ENCODE measurements at regions of chr11 and their contacts with region 1.

Region 1: DNA sequence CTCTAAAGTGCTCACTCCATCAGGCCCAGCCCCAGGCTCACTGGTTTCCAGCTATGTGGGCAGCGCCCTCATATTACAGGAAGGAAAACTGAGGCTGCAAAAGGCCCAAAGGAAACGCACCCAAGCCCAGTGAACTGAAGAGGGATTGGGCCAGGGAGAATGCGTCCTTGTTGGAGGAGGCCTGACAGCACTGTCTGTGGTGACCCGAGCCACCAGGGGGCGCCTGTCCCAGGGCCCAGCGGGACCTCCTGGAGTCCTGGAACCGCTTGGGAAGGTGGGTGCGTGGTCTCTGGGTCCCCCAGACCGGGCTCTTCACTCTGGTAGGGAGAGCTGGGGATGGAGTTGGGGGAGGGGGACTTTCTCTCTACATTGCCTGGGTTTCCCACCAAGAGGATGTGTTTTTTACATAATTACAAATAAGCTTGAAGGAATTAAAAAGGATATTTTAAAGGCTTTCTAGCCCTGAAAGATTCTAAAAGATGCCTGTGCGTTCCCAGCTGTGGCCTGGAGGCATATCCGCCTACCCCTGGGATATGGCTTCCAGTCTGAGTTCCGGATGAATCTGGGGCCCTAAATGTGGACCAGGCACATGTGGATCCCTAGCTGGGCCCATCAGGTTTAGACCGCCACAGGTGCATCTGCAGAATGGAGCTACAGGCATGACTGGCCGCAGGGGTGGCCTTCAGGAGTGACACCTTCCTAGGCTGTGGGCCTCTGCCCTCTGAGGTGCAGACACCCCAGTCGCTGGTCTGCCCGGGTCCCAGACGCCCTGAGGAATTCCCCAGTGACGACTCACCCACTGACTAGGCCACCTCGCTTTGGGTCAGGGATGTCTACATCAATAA is 4.2 kb downstream of the SPI1 start:
- DNase-seq: no peak
- H3K4me3 ChIP-seq: no peak overlapping the region
- CTCF ChIP-seq: peak; percentile 98

Region 2: GRCh38 chr11:47394322-47395222 is 20.5 kb after region 1 on chr11:
- CTCF ChIA-PET with region 1: interaction called, 123 read pairs
- POLR2A ChIA-PET with region 1: interaction called, 3 read pairs
- DNase-seq: no peak
- H3K4me3 ChIP-seq: no peak overlapping the region
- CTCF ChIP-seq: no peak

Region 3: GRCh38 chr11:47407746-47408590 is 33.9 kb after region 1 on chr11 and contains the start of gene SLC39A13:
- CTCF ChIA-PET with region 1: interaction called, 88 read pairs
- POLR2A ChIA-PET with region 1: no interaction called
- DNase-seq: peak; percentile 71
- H3K4me3 ChIP-seq: peak within 1 kb of the TSS; percentile 95
- CTCF ChIP-seq: peak; percentile 81

Region 4: DNA sequence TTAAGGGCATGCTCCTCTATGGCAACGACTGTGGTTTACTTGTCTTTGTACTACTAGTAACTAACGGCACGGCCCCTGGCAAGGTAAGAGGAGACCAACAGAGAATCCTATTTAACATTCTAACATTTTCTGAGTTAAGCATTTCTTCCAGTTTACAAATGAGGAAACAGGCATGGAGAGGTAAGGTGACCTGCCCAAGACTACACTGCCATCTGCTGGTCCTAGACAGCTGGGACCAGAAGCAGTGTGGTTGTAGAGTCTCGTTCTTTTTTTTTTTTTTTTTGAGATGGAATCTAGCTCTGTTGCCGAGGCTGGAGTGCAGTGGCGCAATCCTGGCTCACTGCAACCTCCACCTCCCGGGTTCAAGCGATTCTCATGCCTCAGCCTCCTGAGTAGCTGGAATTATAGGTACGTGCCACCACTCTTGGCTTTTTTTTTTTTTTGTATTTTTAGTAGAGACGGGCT is 80.1 kb after region 1 on chr11:
- CTCF ChIA-PET with region 1: interaction called, 118 read pairs
- POLR2A ChIA-PET with region 1: no interaction called
- DNase-seq: peak; percentile 38
- H3K4me3 ChIP-seq: no peak overlapping the region
- CTCF ChIP-seq: peak; percentile 74

Region 5: GRCh38 chr11:47616726-47617416 is 242.8 kb after region 1 on chr11:
- CTCF ChIA-PET with region 1: interaction called, 29 read pairs
- POLR2A ChIA-PET with region 1: no interaction called
- DNase-seq: peak; percentile 34
- H3K4me3 ChIP-seq: no peak overlapping the region
- CTCF ChIP-seq: peak; percentile 83